IMR-90 (cell line): ENCODE measurements at regions of chr5 and their contacts with region 1.

Region 1: DNA sequence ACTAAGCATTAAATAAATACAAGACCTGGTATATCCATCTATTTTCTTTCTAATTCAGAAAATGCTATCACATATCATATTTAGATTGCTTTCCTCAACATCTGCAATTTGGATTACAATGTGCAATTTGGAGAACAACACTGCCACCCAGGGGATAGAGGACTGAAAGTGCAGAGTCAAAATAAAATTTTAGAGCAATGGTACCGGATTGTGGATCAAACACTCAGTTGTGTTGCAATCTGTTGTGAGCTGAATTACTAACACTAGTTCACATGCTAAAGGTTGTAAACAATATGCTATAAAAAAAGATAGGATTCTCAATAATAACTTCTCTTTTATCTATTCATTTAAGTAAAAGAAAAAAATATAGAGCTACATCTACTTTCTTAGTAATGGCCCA is 11.9 kb upstream of the SRFBP1 start:
- DNase-seq: peak; percentile 60
- ATAC-seq: peak; percentile 89
- H3K4me3 ChIP-seq: no peak overlapping the region
- H3K27ac ChIP-seq: no peak overlapping the region
- H3K4me1 ChIP-seq: no peaks in the 10 kb centered on the region
- H3K27me3 ChIP-seq: no peaks in the 10 kb centered on the region
- CTCF ChIP-seq: peak; percentile 77
- POLR2A ChIP-seq: no peak
- RAD21 ChIP-seq: peak; percentile 86

Region 2: DNA sequence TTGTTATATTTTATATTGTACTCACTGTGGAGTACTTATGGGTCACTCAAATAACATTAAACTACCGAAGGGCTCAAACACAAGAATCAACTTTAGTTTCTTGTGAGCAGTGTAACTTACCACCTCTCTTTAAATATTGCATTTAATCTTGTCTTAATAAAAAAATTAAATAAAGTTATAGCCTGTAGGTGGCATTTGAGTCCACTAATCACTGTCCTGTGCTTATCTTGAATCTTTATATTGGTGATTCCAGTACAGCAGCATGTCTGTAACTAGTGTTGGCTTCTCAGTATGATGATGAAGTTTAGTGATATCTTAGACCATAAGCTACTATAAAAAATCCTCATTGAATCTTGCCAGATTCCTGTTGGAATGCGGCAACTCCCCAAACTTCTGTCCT is 2006.7 kb before region 1 on chr5:
- CTCF ChIA-PET with region 1: no interaction called
- POLR2A ChIA-PET with region 1: no interaction called
- dilution Hi-C with region 1: no loop called
- in situ Hi-C with region 1: loop called (anchors 25 kb)
- intact Hi-C with region 1: no loop called
- DNase-seq: peak; percentile 28
- ATAC-seq: peak; percentile 75
- H3K4me3 ChIP-seq: no peak overlapping the region
- H3K27ac ChIP-seq: no peak overlapping the region
- H3K4me1 ChIP-seq: no peaks in the 10 kb centered on the region
- H3K27me3 ChIP-seq: no peaks in the 10 kb centered on the region
- CTCF ChIP-seq: peak; percentile 50
- POLR2A ChIP-seq: no peak
- RAD21 ChIP-seq: peak; percentile 58

Region 3: DNA sequence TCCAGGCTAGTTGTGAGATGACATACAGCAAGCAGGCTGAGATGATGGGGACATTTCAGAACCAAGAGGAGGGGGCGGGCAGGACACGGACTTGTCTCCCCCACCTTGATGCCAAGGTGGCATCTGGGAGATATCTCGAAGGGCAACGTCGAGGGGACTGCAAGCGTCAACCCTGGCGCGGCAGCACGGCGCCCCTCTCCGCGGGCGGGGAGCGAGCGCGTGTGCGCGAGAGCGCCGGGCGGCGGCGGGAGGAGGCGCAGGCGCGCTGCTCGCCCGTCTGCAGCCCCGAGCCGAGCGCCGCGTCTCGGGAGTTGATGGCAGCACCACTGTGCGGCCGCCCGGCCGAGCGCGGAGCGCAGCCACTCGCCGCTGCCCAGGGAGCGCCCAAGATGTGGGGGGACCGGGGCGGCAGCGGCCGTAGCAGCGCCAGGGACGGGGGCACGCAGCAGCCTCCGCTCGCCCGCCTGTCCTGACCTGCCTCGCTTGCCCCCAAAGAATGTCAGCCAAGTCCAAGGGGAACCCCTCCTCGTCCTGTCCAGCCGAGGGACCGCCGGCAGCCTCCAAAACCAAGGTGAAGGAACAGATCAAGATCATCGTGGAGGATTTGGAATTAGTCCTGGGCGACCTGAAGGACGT is 1485.8 kb before region 1 on chr5 and contains the start of gene PRR16:
- CTCF ChIA-PET with region 1: no interaction called
- POLR2A ChIA-PET with region 1: no interaction called
- dilution Hi-C with region 1: no loop called
- in situ Hi-C with region 1: loop called (anchors 25 kb)
- intact Hi-C with region 1: loop called (anchors 5 kb)
- DNase-seq: peak; percentile 73
- ATAC-seq: peak; percentile 90
- H3K4me3 ChIP-seq: peak within 1 kb of the TSS; percentile 94
- H3K27ac ChIP-seq: peak within 1 kb of the TSS; percentile 95
- H3K4me1 ChIP-seq: no peaks in the 10 kb centered on the region
- H3K27me3 ChIP-seq: no peaks in the 10 kb centered on the region
- CTCF ChIP-seq: peak; percentile 42
- POLR2A ChIP-seq: no peak
- RAD21 ChIP-seq: peak; percentile 51
- total RNA-seq, gene PRR16: 9.9 and 10.6 TPM in 2 replicates

Region 4: DNA sequence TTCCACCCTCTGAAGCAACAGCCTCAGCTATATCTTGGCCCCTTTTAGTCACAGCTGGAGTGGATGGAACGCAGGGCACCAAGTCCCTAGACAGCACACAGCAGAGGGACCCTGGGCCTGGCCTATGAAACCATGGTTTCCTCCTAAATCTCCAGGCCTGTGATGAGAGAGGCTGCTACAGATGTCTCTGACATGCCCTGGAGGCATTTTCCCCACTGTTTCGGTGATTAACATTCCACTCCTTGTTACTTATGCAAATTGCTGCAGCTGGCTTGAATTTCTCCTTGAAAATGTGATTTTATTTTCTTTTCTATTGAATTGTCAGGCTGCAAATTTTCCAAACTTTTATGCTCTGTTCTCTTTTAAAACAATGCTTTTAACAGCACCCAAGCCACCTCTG is 1101.0 kb before region 1 on chr5:
- CTCF ChIA-PET with region 1: no interaction called
- POLR2A ChIA-PET with region 1: no interaction called
- dilution Hi-C with region 1: no loop called
- in situ Hi-C with region 1: loop called (anchors 25 kb)
- intact Hi-C with region 1: no loop called
- DNase-seq: no peak
- ATAC-seq: no peak
- H3K4me3 ChIP-seq: no peak overlapping the region
- H3K27ac ChIP-seq: no peak overlapping the region
- H3K4me1 ChIP-seq: no peaks in the 10 kb centered on the region
- H3K27me3 ChIP-seq: no peaks in the 10 kb centered on the region
- CTCF ChIP-seq: no peak
- POLR2A ChIP-seq: no peak
- RAD21 ChIP-seq: no peak

Region 5: DNA sequence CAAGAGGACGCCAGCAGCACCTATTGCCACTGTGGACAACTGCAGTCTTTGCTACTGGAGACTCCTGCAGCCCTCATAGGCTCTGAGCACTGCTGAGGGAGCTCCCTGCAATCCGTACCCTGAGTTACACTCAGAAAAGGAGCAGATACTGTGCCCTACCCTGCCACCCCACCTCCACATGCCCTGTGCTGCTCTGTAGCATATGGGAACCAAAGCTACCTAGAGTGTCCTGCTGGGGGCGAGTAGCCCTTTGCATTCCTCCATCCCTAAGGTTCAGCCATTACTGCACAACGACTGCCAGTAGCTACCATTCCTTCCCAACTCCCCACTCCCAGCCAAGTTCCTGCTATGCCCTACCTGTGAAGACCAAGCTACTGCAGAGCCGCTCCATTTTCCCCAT is 272.0 kb after region 1 on chr5:
- CTCF ChIA-PET with region 1: no interaction called
- POLR2A ChIA-PET with region 1: no interaction called
- dilution Hi-C with region 1: no loop called
- in situ Hi-C with region 1: no loop called
- intact Hi-C with region 1: no loop called
- DNase-seq: no peak
- ATAC-seq: no peak
- H3K4me3 ChIP-seq: no peak overlapping the region
- H3K27ac ChIP-seq: no peak overlapping the region
- H3K4me1 ChIP-seq: no peaks in the 10 kb centered on the region
- H3K27me3 ChIP-seq: no peaks in the 10 kb centered on the region
- CTCF ChIP-seq: no peak
- POLR2A ChIP-seq: no peak
- RAD21 ChIP-seq: no peak

Region 6: GRCh38 chr5:122415030-122415800 is 465.3 kb after region 1 on chr5:
- CTCF ChIA-PET with region 1: no interaction called
- POLR2A ChIA-PET with region 1: no interaction called
- dilution Hi-C with region 1: no loop called
- in situ Hi-C with region 1: loop called (anchors 25 kb)
- intact Hi-C with region 1: no loop called
- DNase-seq: peak; percentile 80
- ATAC-seq: peak; percentile 97
- H3K4me3 ChIP-seq: no peak overlapping the region
- H3K27ac ChIP-seq: no peak overlapping the region
- H3K4me1 ChIP-seq: peaks cover 9% of the 10 kb centered on the region
- H3K27me3 ChIP-seq: no peaks in the 10 kb centered on the region
- CTCF ChIP-seq: peak; percentile 85
- POLR2A ChIP-seq: no peak
- RAD21 ChIP-seq: peak; percentile 87